ENCODE measurements at regions of chr7 and their contacts with region 1.

Region 1: DNA sequence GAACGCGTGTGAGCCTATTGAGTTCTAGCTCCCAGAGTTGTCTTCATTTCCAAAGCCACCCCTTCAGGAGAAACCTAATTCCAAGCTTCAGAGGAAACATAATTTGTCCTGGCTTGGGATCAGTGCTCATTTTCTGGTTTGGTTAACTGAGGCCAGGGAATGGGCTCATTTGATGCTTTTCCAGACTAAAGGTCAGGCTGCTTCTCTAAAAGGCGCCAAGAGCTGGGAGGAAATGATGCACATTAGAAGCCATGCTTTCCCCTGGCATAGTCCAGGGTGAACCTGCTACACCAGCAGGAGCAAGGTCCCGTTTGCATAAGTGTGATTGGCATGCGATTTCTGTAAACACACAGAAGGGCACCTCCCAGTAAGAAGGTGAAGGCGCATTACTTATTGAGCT is 435.0 kb downstream of the GALNT17 start:
- DNase-seq: no peak
- H3K4me3 ChIP-seq: no peak overlapping the region
- H3K27ac ChIP-seq: no peak overlapping the region
- H3K4me1 ChIP-seq: no peaks in the 10 kb centered on the region
- H3K27me3 ChIP-seq: no peaks in the 10 kb centered on the region
- CTCF ChIP-seq: no peak
- EP300 ChIP-seq: no peak
- POLR2A ChIP-seq: no peak

Region 2: DNA sequence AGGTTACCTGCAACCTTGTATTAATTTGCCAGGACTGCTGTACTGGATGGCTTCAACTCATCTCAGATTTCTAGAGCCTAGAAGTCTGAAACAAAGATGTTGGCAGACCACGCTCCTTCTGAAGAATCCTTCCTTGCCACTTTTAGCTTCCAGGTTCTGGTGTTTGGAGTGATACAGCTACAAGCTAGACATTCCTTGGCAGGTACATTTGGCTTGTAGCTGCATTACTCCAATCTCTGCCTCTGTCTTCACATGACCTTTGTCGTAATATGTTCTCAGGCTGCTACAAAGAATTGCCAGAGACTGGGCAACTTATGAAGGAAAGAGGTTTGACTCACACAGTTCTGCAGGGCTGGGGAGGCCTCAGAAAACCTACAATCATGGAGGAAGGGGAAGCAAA is 288.7 kb before region 1 on chr7:
- intact Hi-C with region 1: loop called in 1 of 4 experiments (anchors 2 kb)
- DNase-seq: no peak
- H3K4me3 ChIP-seq: no peak overlapping the region
- H3K27ac ChIP-seq: no peak overlapping the region
- H3K4me1 ChIP-seq: peaks cover 13% of the 10 kb centered on the region
- H3K27me3 ChIP-seq: no peaks in the 10 kb centered on the region
- CTCF ChIP-seq: no peak
- EP300 ChIP-seq: no peak
- POLR2A ChIP-seq: no peak

Region 3: GRCh38 chr7:71457846-71458590 is 109.0 kb before region 1 on chr7:
- intact Hi-C with region 1: no loop called
- DNase-seq: no peak
- H3K4me3 ChIP-seq: no peak overlapping the region
- H3K27ac ChIP-seq: no peak overlapping the region
- H3K4me1 ChIP-seq: peaks cover 1% of the 10 kb centered on the region
- H3K27me3 ChIP-seq: no peaks in the 10 kb centered on the region
- CTCF ChIP-seq: no peak
- EP300 ChIP-seq: no peak
- POLR2A ChIP-seq: no peak

Region 4: GRCh38 chr7:71538210-71538609 is 28.8 kb before region 1 on chr7:
- intact Hi-C with region 1: no loop called
- DNase-seq: no peak
- H3K4me3 ChIP-seq: no peak overlapping the region
- H3K27ac ChIP-seq: no peak overlapping the region
- H3K4me1 ChIP-seq: no peaks in the 10 kb centered on the region
- H3K27me3 ChIP-seq: no peaks in the 10 kb centered on the region
- CTCF ChIP-seq: no peak
- EP300 ChIP-seq: no peak
- POLR2A ChIP-seq: no peak